Tibial artery (tissue), 4 donors: ENCODE measurements at regions of chr9 and their contacts with region 1.

Region 1: GRCh38 chr9:75238311-75238978 is 150.1 kb downstream of the OSTF1 start:
- DNase-seq: no peak
- H3K4me3 ChIP-seq: no peak overlapping the region
- H3K27ac ChIP-seq: no peak overlapping the region
- H3K4me1 ChIP-seq: peaks cover 0 to 6% (median 2%) of the 10 kb centered on the region in 4 donors
- H3K27me3 ChIP-seq: no peaks in the 10 kb centered on the region
- CTCF ChIP-seq: peak; percentile 79 to 86

Region 2: DNA sequence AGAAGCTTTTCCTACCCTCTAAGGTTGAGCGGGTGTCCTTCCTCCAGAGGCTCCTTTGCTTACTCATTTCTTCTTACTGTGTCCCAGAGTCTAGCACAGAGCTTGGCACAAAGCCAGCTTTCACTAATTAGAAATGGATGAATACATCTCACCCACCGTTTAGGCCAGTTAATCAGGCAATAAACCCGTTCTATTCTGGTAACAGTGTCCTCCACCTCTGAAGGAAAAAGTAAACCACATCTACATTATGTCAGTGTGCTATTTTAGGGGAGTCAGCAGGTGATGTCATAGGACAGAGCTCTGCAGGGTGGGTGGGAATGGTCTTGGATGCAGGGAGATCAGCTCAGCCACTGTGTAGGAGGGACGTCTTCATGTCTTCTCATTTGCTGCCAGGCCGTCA is 40.9 kb before region 1 on chr9:
- intact Hi-C with region 1: loop called (anchors 5 kb)
- DNase-seq: no peak
- H3K4me3 ChIP-seq: no peak overlapping the region
- H3K27ac ChIP-seq: no peak overlapping the region
- H3K4me1 ChIP-seq: peaks cover 0 to 13% (median 0%) of the 10 kb centered on the region in 4 donors
- H3K27me3 ChIP-seq: no peaks in the 10 kb centered on the region
- CTCF ChIP-seq: no peak